Thyroid gland (tissue), 4 donors: ENCODE measurements at regions of chr17 and their contacts with region 1.

Region 1: GRCh38 chr17:18960803-18961511 is 9.0 kb downstream of the SLC5A10 start:
- DNase-seq: peak; percentile 80
- H3K4me3 ChIP-seq: no peak overlapping the region
- H3K27ac ChIP-seq: no peak overlapping the region
- H3K4me1 ChIP-seq: no peaks in the 10 kb centered on the region
- H3K27me3 ChIP-seq: no peaks in the 10 kb centered on the region
- CTCF ChIP-seq: peak; percentile 83 to 93 (median 90)
- POLR2A ChIP-seq: no peak

Region 2: DNA sequence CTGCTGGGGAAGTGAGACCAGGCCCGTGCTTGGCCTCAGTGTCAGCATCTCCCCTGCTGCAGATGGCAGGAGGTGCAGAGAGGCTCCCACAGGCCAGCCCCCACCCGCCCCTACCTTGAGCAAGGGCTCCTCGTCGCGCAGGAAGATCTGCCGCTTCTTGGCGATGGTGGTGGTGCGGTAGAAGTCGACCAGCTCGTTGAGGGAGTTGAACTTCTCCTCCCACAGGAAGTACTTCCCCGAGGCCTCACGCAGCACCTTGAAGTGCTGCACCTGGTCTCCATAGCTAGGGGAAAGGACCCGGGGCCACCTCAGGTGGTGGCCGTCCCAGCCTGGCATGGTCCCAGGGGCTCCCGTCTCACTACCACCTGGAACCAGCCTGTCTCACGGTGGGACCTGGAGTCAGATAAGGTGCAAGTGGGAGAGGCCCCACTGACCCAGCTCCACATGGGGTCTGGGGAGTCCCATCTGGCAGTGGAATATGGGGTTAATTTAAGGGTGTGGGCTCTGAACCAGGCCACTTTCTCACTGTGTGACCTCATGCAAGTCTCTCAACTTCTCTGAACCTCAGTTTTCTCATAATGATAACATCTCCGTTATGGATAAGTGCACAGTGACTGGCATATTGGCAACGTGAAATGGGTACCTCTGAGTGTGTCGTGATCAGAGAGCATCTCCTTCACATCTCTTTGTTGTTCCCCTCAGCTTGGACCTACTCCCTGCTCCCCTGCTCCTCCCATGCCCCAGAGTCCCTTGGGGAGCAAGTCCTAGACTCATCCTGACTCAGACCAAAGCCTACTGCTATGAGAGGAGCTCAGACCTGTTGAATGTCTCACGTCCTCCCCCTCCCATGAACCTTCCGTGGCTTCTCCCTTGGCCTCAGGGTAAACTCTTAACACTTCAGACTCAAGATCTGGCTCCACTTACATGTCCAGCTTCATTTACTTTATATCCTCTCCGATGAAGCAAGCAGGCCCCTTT is 63.4 kb after region 1 on chr17:
- intact Hi-C with region 1: loop called (anchors 10 kb)
- DNase-seq: no peak
- H3K4me3 ChIP-seq: no peak overlapping the region
- H3K27ac ChIP-seq: no peak overlapping the region
- H3K4me1 ChIP-seq: peaks cover 0 to 4% of the 10 kb centered on the region in 2 donors
- H3K27me3 ChIP-seq: no peaks in the 10 kb centered on the region
- CTCF ChIP-seq: no peak
- POLR2A ChIP-seq: no peak